ENCODE measurements at regions of chr19 and their contacts with region 1.

Region 1: GRCh38 chr19:48333467-48334384 is 8.4 kb downstream of the EMP3 start:
- DNase-seq: peak; percentile 95
- H3K4me3 Mint-ChIP-seq: peak overlapping the region; percentile 92
- H3K27ac Mint-ChIP-seq: peak overlapping the region; percentile 97
- H3K4me1 Mint-ChIP-seq: peaks cover 46% of the 10 kb centered on the region
- H3K27me3 Mint-ChIP-seq: no peaks in the 10 kb centered on the region

Region 2: DNA sequence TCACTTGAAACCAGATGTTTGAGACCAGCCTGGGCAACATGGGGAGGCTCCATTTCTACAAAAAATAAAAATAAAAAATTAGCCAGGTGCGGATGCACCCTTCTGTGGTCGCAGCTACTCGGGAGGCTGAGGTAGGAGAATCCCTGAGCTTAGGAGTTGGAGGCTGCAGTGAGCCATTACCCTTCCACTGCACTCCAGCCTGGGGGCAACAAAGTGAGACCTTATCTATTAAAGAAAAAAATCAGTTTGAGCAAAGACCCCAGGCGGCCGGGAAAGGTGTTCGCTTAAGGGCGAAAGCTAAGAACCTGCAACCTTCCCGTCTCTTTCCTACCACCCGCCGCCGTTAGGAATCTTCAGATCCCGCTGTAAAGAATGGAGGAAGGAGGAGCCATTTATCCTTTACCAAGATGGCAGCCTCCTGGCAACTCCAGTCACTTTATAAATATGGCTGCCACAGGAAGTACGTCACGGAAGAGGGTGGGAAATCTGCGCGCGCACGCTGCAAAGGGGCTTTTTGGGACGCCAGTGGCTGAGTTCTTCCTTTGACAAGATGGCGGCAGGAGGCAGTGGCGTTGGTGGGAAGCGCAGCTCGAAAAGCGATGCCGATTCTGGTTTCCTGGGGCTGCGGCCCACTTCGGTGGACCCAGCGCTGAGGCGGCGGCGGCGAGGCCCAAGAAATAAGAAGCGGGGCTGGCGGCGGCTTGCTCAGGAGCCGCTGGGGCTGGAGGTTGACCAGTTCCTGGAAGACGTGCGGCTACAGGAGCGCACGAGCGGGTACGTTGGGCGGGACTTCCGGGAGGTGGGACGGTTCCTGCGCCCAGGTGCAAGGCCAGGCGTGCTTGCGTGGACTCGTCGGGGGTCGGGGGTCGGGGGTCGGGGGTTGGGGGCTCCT is 588.5 kb before region 1 on chr19 and contains the start of gene NOP53:
- CTCF ChIA-PET with region 1: no interaction called
- POLR2A ChIA-PET with region 1: no interaction called
- intact Hi-C with region 1: loop called (anchors 10 kb)
- DNase-seq: peak; percentile 98
- H3K4me3 Mint-ChIP-seq: peak within 1 kb of the TSS; percentile 99
- H3K27ac Mint-ChIP-seq: peak within 1 kb of the TSS; percentile 100
- H3K4me1 Mint-ChIP-seq: peaks cover 49% of the 10 kb centered on the region
- H3K27me3 Mint-ChIP-seq: peaks cover 2% of the 10 kb centered on the region
- total RNA-seq, gene NOP53: 259 to 268 TPM

Region 3: GRCh38 chr19:48186541-48186991 is 147.2 kb before region 1 on chr19:
- CTCF ChIA-PET with region 1: no interaction called
- POLR2A ChIA-PET with region 1: no interaction called
- intact Hi-C with region 1: no loop called
- DNase-seq: no peak
- H3K4me3 Mint-ChIP-seq: no peak overlapping the region
- H3K27ac Mint-ChIP-seq: no peak overlapping the region
- H3K4me1 Mint-ChIP-seq: peaks cover 2% of the 10 kb centered on the region
- H3K27me3 Mint-ChIP-seq: no peaks in the 10 kb centered on the region

Region 4: GRCh38 chr19:48271531-48272151 is 62.1 kb before region 1 on chr19:
- CTCF ChIA-PET with region 1: interaction called, 27 read pairs
- POLR2A ChIA-PET with region 1: no interaction called
- intact Hi-C with region 1: no loop called
- DNase-seq: peak; percentile 29
- H3K4me3 Mint-ChIP-seq: peak overlapping the region; percentile 70
- H3K27ac Mint-ChIP-seq: no peak overlapping the region
- H3K4me1 Mint-ChIP-seq: peaks cover 10% of the 10 kb centered on the region
- H3K27me3 Mint-ChIP-seq: peaks cover 12% of the 10 kb centered on the region

Region 5: DNA sequence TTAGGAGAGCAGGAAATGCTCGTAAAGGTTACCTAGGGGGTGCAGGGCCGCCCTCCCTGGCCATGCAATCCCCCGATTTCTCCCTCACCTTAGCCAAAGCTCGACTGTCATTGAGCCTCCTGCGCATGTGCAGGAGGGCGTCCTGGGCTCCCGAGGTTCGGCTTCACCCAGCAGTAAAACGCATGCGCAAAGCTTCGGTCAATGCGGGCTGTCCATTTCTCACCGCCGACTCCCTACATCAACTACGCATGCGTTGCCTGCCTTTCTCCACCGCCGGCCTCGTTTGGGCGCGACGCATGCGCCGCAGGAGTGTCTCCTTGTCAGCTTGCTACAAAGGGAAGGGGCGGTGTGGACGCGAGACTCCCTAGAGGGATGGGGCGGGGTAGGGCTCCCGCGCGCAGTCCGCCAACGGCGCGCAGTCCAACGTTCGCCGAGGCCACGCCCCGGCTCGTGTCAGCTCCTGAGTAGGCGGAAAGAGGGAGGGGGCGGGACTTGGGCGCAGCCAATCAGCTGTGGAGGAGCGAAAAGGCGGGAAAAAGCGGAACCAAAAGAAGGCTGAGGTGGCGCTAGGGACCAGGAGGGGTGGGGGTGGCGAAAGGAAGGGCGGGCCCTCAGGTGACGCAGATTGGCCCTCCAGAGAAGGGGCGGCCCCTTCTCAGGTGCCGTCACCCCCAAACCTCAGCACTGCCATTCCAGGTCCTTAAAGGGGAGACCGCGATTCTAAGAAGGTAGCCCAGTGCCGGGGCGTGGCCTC is 30.3 kb after region 1 on chr19 and contains the starts of genes SYNGR4 and TMEM143:
- CTCF ChIA-PET with region 1: interaction called, 7 read pairs
- POLR2A ChIA-PET with region 1: interaction called, 7 read pairs
- intact Hi-C with region 1: loop called (anchors 1 kb)
- DNase-seq: peak; percentile 99
- H3K4me3 Mint-ChIP-seq: peak within 1 kb of the TSS; percentile 88
- H3K27ac Mint-ChIP-seq: peak within 1 kb of the TSS; percentile 94
- H3K4me1 Mint-ChIP-seq: peaks cover 14% of the 10 kb centered on the region
- H3K27me3 Mint-ChIP-seq: no peaks in the 10 kb centered on the region
- total RNA-seq, gene SYNGR4: 0.21 TPM in 1 of 2 experiments, not detected in the other
- total RNA-seq, gene TMEM143: 17.1 to 17.9 TPM

Region 6: GRCh38 chr19:48419158-48419920 is 85.6 kb after region 1 on chr19:
- CTCF ChIA-PET with region 1: interaction called, 3 read pairs
- POLR2A ChIA-PET with region 1: no interaction called
- intact Hi-C with region 1: loop called (anchors 5 kb)
- DNase-seq: peak; percentile 87
- H3K4me3 Mint-ChIP-seq: peak overlapping the region; percentile 67
- H3K27ac Mint-ChIP-seq: peak overlapping the region; percentile 19
- H3K4me1 Mint-ChIP-seq: peaks cover 27% of the 10 kb centered on the region
- H3K27me3 Mint-ChIP-seq: peaks cover 9% of the 10 kb centered on the region

Region 7: DNA sequence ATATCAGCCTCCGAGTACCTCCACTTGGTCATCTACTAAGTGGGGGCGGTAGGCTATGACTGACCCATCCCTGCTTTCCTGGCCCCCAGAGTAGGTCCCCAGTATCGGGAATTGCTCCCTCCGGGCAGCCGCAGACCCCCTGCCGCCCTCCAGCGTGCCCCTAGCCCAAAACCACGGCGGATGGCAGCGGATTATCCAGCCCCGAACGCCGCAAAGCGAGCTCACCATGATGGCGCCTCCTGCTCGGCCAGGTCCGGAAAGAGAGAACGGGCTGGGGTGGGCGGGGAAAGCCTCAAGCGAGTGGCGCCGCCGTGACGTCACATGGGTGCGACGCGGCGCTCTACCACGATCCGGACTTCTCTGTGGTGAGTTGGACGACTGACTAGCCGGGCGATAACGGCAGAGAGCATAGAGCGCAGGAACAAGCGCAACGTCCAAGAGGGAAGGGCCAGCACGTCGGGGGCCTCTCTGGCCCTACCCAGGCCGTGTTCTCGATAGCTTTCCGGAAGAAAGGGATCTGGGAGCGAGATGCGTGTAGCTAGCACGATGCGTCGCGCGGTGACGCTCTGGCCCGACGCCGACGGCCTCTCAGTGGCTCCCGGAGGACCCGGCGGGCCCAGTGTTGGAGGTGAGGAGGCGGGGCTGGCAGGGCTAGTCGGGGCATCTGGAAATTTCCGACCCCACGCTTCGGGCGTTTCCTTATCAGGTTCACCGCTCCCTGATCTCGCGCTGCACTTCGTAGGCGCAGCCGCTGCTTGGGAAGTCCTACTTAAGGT is 285.4 kb after region 1 on chr19 and contains the starts of genes RPL18 and SPHK2:
- CTCF ChIA-PET with region 1: interaction called, 3 read pairs
- POLR2A ChIA-PET with region 1: interaction called, 5 read pairs
- intact Hi-C with region 1: loop called (anchors 5 kb)
- DNase-seq: peak; percentile 97
- H3K4me3 Mint-ChIP-seq: peak within 1 kb of the TSS; percentile 96
- H3K27ac Mint-ChIP-seq: peak within 1 kb of the TSS; percentile 97
- H3K4me1 Mint-ChIP-seq: peaks cover 56% of the 10 kb centered on the region
- H3K27me3 Mint-ChIP-seq: no peaks in the 10 kb centered on the region
- total RNA-seq, gene RPL18: 2,095 to 2,140 TPM
- total RNA-seq, gene SPHK2: 24.1 to 24.6 TPM